Motor neuron (in vitro differentiated cells): ENCODE measurements at regions of chr11 and their contacts with region 1.

Region 1: GRCh38 chr11:37988031-37988430 is 1390.0 kb upstream of the RAG2 start:
- ATAC-seq: no peak
- H3K4me3 ChIP-seq: no peak overlapping the region
- H3K27ac ChIP-seq: no peak overlapping the region
- H3K4me1 ChIP-seq: no peaks in the 10 kb centered on the region

Region 2: DNA sequence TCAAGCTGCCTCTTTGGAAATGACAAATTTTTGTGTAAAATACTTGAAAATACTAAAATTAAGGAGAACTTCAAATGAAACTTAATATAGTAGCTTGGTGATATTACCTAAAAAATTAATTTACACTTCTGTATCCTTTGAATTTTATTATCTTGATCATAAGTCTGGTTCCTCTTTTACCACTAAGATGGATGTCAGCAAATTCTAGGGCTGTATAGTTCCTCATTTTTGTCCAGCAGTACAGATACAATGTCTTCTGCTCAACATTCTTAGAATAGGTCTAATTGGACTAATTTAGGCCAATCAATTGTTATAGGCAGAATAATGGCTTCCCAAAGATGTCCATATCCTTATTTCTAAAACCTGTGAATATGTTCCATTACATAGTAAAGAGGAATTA is 92.0 kb before region 1 on chr11:
- in situ Hi-C with region 1: loop called in 1 of 9 experiments (anchors 25 kb)
- ATAC-seq: no peak
- H3K4me3 ChIP-seq: no peak overlapping the region
- H3K27ac ChIP-seq: no peak overlapping the region
- H3K4me1 ChIP-seq: no peaks in the 10 kb centered on the region